ENCODE measurements at regions of chr3 and their contacts with region 1.

Region 1: GRCh38 chr3:134299185-134299887 is 48.7 kb upstream of the RYK start:
- ATAC-seq: peak in 5 of 8 experiments; percentile 51 to 81 (median 76)
- H3K4me3 ChIP-seq: no peak overlapping the region
- H3K27ac ChIP-seq: no peak overlapping the region
- H3K4me1 ChIP-seq: no peaks in the 10 kb centered on the region

Region 2: DNA sequence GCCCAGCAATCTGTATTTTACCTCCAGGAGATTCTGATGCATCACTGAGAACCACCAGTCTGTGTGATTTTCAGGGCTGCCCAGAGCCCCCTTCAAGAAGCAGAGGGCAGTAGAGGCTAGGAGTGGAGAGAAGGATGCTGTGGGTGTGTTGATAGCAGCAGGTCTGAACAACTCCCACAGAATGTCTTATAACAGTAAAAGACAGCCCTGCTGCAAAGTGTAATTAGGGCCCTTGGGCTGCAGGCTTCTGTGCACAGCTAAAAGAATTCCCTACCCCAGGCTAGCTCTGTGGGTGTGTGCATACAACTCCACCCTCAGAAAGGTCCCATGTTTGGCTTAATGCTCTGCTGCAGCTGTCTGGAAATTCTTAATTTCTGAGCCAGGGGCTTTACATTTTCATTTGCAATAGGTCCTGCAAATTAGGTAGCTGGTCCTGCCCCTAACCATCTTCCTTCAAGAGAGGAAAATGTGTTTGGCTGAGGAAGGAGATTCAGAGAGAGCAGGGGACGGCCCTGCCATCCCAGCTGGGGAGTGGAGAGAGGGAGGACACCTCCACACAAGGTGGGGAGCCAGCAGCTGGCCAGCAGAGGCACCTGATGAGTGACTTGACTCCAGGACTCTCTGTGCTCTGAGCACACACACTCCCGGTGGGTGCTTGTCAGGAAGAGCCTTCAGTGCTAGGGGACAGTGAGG is 360.4 kb before region 1 on chr3:
- in situ Hi-C with region 1: no loop called
- ATAC-seq: peak in 4 of 8 experiments; percentile 23 to 93 (median 90)
- H3K4me3 ChIP-seq: no peak overlapping the region
- H3K27ac ChIP-seq: no peak overlapping the region
- H3K4me1 ChIP-seq: no peaks in the 10 kb centered on the region

Region 3: DNA sequence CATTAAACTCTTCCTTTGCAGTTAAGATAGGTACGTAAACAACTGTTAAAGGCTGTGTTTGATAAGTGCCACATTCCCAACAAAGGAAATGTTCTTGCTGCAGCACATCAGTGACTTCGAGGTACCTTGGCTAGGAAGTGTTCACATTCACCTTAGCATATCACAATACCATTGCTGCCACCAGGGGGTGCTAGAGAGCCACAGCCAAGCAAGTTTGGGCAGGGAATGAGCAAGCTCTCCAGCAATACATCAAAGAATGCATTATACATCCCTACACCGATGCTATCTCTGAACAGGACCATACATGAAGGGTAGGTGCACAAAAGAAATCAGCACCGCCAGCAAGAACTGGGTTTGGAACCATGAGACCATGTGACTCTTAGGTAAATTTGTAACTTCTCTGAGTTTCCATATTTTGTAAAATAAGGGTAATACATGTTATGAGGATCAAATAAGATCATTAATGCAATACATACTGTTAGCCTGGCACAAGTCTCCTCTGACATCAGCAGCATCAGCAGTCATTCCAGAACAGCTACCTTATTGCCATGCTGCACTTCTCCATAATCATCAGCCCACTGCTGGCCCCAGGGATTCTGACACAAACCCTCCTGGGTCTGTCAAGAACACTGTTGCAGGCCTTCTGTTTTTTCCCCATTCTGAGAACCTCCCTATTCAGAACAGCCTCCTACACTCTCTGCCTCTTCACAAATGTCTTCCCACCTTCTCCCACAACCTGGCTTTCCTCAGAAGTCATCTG is 86.2 kb before region 1 on chr3:
- in situ Hi-C with region 1: loop called in 1 of 9 experiments (anchors 10 kb)
- ATAC-seq: peak; percentile 61 to 96 (median 87)
- H3K4me3 ChIP-seq: no peak overlapping the region
- H3K27ac ChIP-seq: no peak overlapping the region
- H3K4me1 ChIP-seq: no peaks in the 10 kb centered on the region

Region 4: GRCh38 chr3:134552784-134553183 is 253.4 kb after region 1 on chr3:
- in situ Hi-C with region 1: no loop called
- ATAC-seq: peak in 2 of 8 experiments; percentile 44 to 64
- H3K4me3 ChIP-seq: no peak overlapping the region
- H3K27ac ChIP-seq: no peak overlapping the region
- H3K4me1 ChIP-seq: no peaks in the 10 kb centered on the region